Activated CD4-positive, alpha-beta T cell treated with anti-CD3 and anti-CD28 coated beads for 36 hours (primary cell): ENCODE measurements at regions of chr13 and their contacts with region 1.

Region 1: GRCh38 chr13:87384099-87384498 is 287.1 kb upstream of the SLITRK5 start:
- DNase-seq: no peak
- ATAC-seq: no peak
- H3K4me3 Mint-ChIP-seq: no peak overlapping the region
- H3K27ac Mint-ChIP-seq: no peak overlapping the region
- H3K4me1 Mint-ChIP-seq: no peaks in the 10 kb centered on the region
- H3K27me3 Mint-ChIP-seq: no peaks in the 10 kb centered on the region

Region 2: DNA sequence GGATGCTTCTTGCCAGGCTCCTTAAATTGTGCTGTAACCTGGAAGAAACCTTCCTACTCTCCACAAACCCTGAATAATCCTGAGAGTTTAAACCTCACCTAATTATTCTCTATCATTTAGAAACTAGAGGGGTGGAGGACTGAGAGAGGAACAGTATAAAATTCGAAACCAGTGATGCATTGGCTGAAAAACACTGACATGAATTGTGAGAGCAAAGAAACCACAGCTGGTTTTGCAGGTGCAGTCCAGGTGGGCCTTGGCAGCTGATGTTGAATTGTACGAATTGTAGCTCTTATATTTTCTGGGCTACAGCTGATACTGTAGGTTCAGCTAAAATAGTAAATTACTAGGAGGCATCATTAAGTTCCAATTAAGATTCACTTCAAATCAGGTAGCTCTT is 60.0 kb after region 1 on chr13:
- CTCF ChIA-PET with region 1: no interaction called
- POLR2A ChIA-PET with region 1: no interaction called
- intact Hi-C with region 1: loop called in 1 of 2 experiments (anchors 5 kb)
- DNase-seq: no peak
- ATAC-seq: no peak
- H3K4me3 Mint-ChIP-seq: no peak overlapping the region
- H3K27ac Mint-ChIP-seq: no peak overlapping the region
- H3K4me1 Mint-ChIP-seq: no peaks in the 10 kb centered on the region
- H3K27me3 Mint-ChIP-seq: no peaks in the 10 kb centered on the region

Region 3: DNA sequence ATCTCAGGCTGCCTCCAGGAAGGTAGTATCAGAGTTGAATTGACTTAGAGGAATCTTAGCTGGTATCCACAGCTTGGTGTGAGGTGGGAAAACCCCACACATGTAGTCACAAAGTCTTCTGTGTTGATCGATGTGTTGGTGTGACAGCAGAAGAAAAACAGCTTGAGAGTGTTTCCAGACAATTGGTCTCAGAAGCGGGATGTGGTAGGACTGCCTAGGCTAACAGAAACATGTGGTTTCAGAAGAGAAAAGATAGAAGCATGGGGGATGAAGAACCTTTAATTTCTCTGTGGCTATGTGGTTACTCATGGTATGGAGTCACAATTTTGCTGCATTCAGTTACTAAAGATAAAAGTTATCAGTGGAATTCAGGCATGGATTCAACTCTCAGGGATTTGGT is 152.4 kb after region 1 on chr13:
- CTCF ChIA-PET with region 1: no interaction called
- POLR2A ChIA-PET with region 1: no interaction called
- intact Hi-C with region 1: no loop called
- DNase-seq: no peak
- ATAC-seq: no peak
- H3K4me3 Mint-ChIP-seq: no peak overlapping the region
- H3K27ac Mint-ChIP-seq: no peak overlapping the region
- H3K4me1 Mint-ChIP-seq: no peaks in the 10 kb centered on the region
- H3K27me3 Mint-ChIP-seq: no peaks in the 10 kb centered on the region